ENCODE measurements at regions of chr4 and their contacts with region 1.

Region 1: GRCh38 chr4:26342328-26343037 is 21.7 kb downstream of the RBPJ start:
- DNase-seq: peak; percentile 15 to 82
- H3K4me3 ChIP-seq: no peak overlapping the region
- H3K27ac ChIP-seq: peak overlapping the region; percentile 30
- H3K4me1 ChIP-seq: peaks cover 23% of the 10 kb centered on the region
- H3K27me3 ChIP-seq: no peaks in the 10 kb centered on the region
- CTCF ChIP-seq: no peak

Region 2: GRCh38 chr4:25767877-25768725 is 574.4 kb before region 1 on chr4:
- CTCF ChIA-PET with region 1: no interaction called
- POLR2A ChIA-PET with region 1: no interaction called
- intact Hi-C with region 1: no loop called
- DNase-seq: peak in 1 of 2 experiments; percentile 37
- H3K4me3 ChIP-seq: no peak overlapping the region
- H3K27ac ChIP-seq: no peak overlapping the region
- H3K4me1 ChIP-seq: no peaks in the 10 kb centered on the region
- H3K27me3 ChIP-seq: no peaks in the 10 kb centered on the region
- CTCF ChIP-seq: peak; percentile 66

Region 3: DNA sequence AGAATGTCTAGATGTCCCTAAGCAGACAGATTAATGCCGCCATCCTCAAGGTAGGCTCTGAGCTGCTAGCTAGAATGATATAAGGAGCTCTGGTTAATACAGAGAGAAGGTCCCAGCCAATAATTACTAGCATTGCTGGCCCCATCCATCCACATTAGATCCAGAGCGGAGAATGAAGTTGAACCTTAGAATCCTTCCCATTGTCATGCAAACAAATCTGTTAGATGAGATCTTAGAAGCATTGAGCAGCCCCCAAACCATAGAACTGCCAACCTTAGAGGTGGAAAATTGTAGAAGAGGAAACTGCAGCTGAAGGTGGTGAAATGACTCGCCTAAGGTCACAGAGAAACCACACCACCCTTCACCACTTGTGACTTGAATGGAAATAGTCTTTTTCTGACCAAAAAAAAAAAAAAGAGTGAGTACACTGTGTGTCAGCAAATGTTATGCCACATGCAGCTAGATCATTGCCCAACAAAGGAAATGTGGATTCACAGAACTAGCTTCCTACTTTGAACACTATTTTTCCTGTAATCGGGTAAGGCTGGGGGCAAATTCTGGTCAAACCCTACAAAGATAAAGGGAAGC is 266.4 kb before region 1 on chr4:
- CTCF ChIA-PET with region 1: no interaction called
- POLR2A ChIA-PET with region 1: no interaction called
- intact Hi-C with region 1: no loop called
- DNase-seq: no peak
- H3K4me3 ChIP-seq: no peak overlapping the region
- H3K27ac ChIP-seq: no peak overlapping the region
- H3K4me1 ChIP-seq: 0 out of 2 replicates have a peak, but pooled peaks cover 3% of the 10 kb centered on the region
- H3K27me3 ChIP-seq: no peaks in the 10 kb centered on the region
- CTCF ChIP-seq: no peak

Region 4: DNA sequence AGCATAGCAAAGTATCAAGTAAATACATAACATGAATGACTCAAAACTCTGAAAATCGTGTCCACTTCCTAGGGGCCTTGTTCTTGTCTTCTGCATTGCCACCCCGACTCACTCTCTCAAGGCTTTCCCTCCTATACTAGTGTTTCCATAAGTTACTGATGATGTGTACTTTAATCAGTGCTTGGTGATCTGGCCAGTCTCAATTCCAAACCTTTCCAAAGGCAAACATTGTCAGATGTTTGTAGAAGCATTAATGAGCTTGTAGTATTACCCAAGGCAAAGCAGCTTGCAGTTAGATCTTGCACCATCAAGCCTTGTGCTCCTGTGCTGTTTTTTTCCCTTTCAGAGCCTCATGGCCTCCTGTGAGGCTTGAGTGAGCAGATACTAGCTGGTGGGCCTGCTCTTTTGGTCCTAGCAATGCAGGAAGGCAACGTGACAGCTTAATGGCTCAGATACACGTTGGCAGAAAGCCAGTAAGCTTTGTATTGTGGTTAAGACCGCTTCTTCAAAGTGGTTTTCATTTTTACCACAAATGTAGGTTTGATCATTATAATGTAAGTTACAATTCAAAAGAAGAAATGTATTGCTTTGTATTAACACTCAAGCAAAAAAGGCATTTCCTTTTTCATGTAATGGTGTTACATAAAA is 30.2 kb after region 1 on chr4:
- CTCF ChIA-PET with region 1: no interaction called
- POLR2A ChIA-PET with region 1: interaction called, 10 read pairs
- intact Hi-C with region 1: no loop called
- DNase-seq: peak; percentile 3 to 60
- H3K4me3 ChIP-seq: no peak overlapping the region
- H3K27ac ChIP-seq: no peak overlapping the region
- H3K4me1 ChIP-seq: peaks cover 9% of the 10 kb centered on the region; the same call in 1 of the 2 replicates
- H3K27me3 ChIP-seq: no peaks in the 10 kb centered on the region
- CTCF ChIP-seq: no peak

Region 5: DNA sequence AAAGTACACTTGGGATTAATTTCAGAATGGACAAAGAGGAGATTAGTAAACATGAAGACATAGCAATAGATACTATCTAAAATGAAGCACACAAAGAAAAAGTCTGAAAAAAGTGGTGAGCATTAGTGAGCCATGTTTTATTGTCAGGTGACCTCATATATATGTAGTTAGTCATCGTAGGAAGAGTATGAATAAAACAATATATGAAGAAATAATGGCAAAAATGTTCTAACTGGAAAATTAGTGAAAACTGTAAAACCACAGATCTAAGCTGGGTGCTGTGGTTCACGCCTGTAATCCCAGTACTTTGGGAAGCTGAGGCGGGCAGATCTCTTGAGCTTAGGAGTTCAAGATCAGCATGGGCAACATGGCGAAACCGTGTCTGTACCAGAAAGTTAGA is 46.2 kb after region 1 on chr4:
- CTCF ChIA-PET with region 1: no interaction called
- POLR2A ChIA-PET with region 1: no interaction called
- intact Hi-C with region 1: loop called (anchors 5 kb)
- DNase-seq: no peak
- H3K4me3 ChIP-seq: no peak overlapping the region
- H3K27ac ChIP-seq: no peak overlapping the region
- H3K4me1 ChIP-seq: no peaks in the 10 kb centered on the region
- H3K27me3 ChIP-seq: no peaks in the 10 kb centered on the region
- CTCF ChIP-seq: no peak

Measured in PC-9 (cell line).